ENCODE measurements at regions of chr5 and their contacts with region 1.

Region 1: DNA sequence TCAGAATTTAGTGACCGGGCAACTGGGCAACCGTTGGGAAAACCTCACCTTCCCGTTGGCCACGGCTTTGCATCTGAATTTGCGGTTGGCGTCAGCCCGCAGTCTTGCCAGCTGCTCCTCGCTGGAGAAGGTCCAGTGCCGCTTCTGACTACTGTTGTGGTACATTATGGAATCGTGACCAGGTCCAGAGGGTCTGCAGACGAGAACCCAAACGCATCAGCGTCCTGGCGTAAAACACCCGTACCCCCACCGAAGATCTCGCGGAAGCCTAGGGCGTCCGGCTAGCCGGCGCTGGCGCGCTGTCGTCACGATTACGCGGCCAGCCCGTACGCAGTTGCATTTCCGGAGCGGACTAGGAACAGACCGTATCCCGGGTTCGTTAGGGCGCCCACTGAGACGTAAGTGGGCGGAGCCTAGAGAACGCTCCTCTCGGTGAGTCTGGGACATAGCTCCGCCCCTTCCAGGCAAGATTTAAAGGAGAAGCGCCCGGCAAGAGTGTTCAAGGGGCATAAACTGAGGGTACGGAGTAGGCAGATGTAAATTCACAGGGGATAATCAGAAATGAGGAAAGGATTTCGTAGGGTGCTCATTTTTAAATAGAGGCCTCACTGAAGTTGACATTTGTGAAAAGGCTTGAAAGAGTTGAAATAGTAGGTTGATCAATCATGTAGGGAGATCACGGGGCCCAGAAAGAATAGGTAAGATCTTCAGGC is at the start of gene CCNH:
- DNase-seq: peak; percentile 83 to 98 (median 97)
- ATAC-seq: peak; percentile 99
- H3K4me3 ChIP-seq: peak within 1 kb of the TSS; percentile 88
- H3K4me3 Mint-ChIP-seq: peak within 1 kb of the TSS; percentile 90 to 100 (median 95)
- H3K27ac ChIP-seq: peak within 1 kb of the TSS; percentile 99
- H3K27ac Mint-ChIP-seq: peak within 1 kb of the TSS; percentile 92 to 99 (median 98)
- H3K4me1 ChIP-seq: peaks cover 26 to 28% of the 10 kb centered on the region in 2 donors
- H3K4me1 Mint-ChIP-seq: peaks cover 24 to 62% (median 50%) of the 10 kb centered on the region in 7 donors
- H3K27me3 ChIP-seq: no peaks in the 10 kb centered on the region
- H3K27me3 Mint-ChIP-seq: peaks cover 0 to 3% (median 0%) of the 10 kb centered on the region in 5 donors
- total RNA-seq, gene CCNH: 57.5 to 239 (median 113) TPM

Region 2: DNA sequence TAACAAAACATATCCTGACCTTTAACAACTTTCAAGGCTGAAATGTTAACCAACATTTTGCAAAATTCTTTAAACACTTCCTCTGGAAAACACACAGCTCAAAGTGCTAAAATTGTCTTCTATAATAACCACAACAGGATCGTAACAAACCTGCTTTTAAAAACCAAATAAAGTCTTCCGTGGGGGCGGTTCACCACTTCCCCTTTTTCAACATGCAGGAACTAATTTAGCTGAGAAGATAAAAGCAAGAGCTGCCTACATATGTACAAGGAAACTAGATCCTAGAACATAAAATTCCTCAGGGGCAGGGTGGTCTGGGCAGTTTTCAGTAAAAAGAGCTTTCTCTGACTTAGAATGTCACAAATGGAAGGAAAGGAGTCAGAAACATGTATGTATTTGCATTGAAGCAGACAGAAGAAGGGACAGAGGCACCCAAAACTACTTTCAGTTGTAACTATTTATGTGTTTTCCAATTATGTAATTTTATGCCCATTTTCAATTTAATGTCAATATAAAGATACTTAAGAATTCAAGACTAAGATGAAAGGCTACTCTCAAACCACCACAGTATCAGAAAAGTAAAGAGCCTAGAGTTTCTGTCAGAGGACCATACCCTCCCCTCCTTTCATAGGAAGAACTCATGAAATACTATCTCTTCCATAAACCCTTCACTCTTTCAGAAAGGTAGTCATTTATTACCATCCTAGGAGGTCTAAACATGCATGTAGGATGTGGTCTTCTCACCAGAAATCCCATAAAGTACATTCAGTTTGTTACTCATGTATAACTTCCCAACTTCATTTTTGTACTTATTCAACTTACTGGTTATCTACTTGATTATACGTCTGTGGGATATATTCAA is 331.0 kb before region 1 on chr5:
- CTCF ChIA-PET with region 1: no interaction called
- POLR2A ChIA-PET with region 1: no interaction called
- intact Hi-C with region 1: loop called in 1 of 2 experiments (anchors 5 kb)
- DNase-seq: peak in 8 of 9 donors; percentile 11 to 59 (median 44)
- ATAC-seq: peak; percentile 84
- H3K4me3 ChIP-seq: no peak overlapping the region
- H3K4me3 Mint-ChIP-seq: peak overlapping the region; percentile 42 to 86 (median 72)
- H3K27ac ChIP-seq: no peak overlapping the region
- H3K27ac Mint-ChIP-seq: peak overlapping the region; percentile 53 to 85 (median 68)
- H3K4me1 ChIP-seq: peaks cover 18 to 35% of the 10 kb centered on the region in 2 donors
- H3K4me1 Mint-ChIP-seq: peaks cover 20 to 60% (median 51%) of the 10 kb centered on the region in 7 donors
- H3K27me3 ChIP-seq: no peaks in the 10 kb centered on the region
- H3K27me3 Mint-ChIP-seq: no peaks in the 10 kb centered on the region

Region 3: DNA sequence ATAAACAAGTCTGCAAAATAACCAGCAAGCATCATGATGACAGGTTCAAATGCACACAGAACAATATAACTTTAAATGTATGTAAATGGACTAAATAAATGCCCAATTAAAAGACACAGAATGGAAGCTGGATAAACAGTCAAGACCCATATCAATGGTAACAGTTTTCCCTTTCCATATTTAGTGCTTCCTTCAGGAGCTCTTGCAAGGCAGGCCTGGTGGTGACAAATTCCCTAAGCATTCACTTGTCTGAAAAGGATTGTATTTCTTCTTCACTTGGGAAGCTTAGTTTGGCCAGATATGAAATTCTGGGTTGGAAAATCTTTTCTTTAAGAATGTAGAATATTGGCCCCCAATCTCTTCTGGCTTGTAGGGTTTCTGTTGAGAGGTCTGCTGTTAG is 265.3 kb before region 1 on chr5:
- CTCF ChIA-PET with region 1: no interaction called
- POLR2A ChIA-PET with region 1: no interaction called
- intact Hi-C with region 1: no loop called
- DNase-seq: no peak
- ATAC-seq: no peak
- H3K4me3 ChIP-seq: no peak overlapping the region
- H3K4me3 Mint-ChIP-seq: no peak overlapping the region
- H3K27ac ChIP-seq: no peak overlapping the region
- H3K27ac Mint-ChIP-seq: no peak overlapping the region
- H3K4me1 ChIP-seq: no peaks in the 10 kb centered on the region
- H3K4me1 Mint-ChIP-seq: peaks cover 0 to 9% (median 0%) of the 10 kb centered on the region in 7 donors
- H3K27me3 ChIP-seq: no peaks in the 10 kb centered on the region
- H3K27me3 Mint-ChIP-seq: peaks cover 0 to 11% (median 0%) of the 10 kb centered on the region in 5 donors

Region 4: DNA sequence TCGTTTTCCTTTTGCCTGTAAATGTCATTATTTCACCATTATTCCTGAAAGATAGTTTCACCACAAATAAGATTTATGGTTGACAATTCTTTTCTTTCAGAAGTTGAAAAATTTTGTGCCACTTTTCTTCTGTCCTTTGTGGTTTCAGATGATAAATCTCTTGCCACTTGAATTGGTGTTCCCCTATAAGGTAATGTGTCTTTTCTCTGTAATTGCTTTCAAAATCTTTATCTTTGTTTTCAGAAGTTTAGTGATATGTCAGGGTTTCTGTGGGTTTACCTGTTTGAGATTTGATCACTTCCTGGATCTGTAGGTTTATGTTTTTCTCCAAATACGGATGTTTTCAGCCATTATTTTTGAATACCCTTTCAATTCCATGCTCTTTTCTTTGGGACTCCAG is 130.5 kb before region 1 on chr5:
- CTCF ChIA-PET with region 1: no interaction called
- POLR2A ChIA-PET with region 1: no interaction called
- intact Hi-C with region 1: loop called in 1 of 2 experiments (anchors 5 kb)
- DNase-seq: peak in 7 of 9 donors; percentile 18 to 68 (median 54)
- ATAC-seq: peak; percentile 86
- H3K4me3 ChIP-seq: peak overlapping the region; percentile 27
- H3K4me3 Mint-ChIP-seq: peak overlapping the region; percentile 56 to 89 (median 80)
- H3K27ac ChIP-seq: peak overlapping the region; percentile 72
- H3K27ac Mint-ChIP-seq: peak overlapping the region; percentile 79 to 96 (median 90)
- H3K4me1 ChIP-seq: peaks cover 14 to 26% of the 10 kb centered on the region in 2 donors
- H3K4me1 Mint-ChIP-seq: peaks cover 34 to 82% (median 64%) of the 10 kb centered on the region in 7 donors
- H3K27me3 ChIP-seq: no peaks in the 10 kb centered on the region
- H3K27me3 Mint-ChIP-seq: no peaks in the 10 kb centered on the region

Region 5: DNA sequence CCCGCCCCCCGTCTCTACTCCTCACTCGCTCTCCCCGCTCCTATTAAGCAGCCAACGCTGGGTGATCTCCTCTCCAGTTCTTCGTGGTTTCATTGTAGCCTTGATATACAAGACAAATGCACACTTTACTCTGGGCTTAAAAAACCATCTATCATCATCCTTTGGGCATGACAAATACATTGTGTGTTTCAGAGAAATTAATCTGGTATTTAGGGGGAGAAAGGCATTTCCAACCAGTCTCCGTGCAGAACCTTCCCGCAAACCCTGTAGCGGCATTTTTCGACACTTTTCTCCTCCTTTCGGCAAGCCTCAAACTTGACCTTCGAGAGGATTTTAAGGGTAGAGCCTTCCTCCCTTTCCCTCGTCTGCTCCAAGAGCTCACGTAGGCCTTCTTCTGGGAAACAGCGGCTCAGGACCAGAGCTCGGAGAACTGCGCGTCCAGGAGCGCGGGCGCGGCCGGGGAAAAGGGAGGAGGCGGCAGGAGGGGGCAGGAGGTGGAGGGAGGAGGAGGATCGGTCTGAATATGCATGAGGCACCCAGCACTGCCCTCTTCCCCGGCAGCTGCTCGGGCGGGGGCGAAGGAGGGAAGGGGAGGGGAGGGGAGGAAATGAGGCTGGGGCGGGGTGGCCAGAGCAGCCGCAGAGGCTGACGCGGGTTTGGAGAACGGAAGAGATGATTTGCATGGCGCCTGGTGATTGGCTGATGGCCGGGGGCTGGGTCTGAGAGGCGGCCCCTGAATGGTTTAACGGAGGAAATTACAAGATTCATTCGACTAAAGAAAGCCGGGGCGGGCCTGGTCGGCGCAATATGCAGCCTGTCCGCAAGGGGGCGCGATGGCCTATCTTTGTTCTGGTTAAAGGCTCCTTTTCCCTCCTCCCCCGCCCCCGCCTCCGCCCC is 728.3 kb after region 1 on chr5:
- CTCF ChIA-PET with region 1: no interaction called
- POLR2A ChIA-PET with region 1: no interaction called
- intact Hi-C with region 1: loop called in 1 of 2 experiments (anchors 1 kb)
- DNase-seq: peak; percentile 50 to 83 (median 60)
- ATAC-seq: peak; percentile 92
- H3K4me3 ChIP-seq: peak overlapping the region; percentile 43
- H3K4me3 Mint-ChIP-seq: no peak overlapping the region
- H3K27ac ChIP-seq: no peak overlapping the region
- H3K27ac Mint-ChIP-seq: no peak overlapping the region
- H3K4me1 ChIP-seq: peaks cover 19 to 24% of the 10 kb centered on the region in 2 donors
- H3K4me1 Mint-ChIP-seq: peaks cover 7 to 22% (median 9%) of the 10 kb centered on the region in 7 donors
- H3K27me3 ChIP-seq: peaks cover 17 to 28% of the 10 kb centered on the region in 2 donors
- H3K27me3 Mint-ChIP-seq: peaks cover 18 to 44% (median 38%) of the 10 kb centered on the region in 5 donors

Region 6: DNA sequence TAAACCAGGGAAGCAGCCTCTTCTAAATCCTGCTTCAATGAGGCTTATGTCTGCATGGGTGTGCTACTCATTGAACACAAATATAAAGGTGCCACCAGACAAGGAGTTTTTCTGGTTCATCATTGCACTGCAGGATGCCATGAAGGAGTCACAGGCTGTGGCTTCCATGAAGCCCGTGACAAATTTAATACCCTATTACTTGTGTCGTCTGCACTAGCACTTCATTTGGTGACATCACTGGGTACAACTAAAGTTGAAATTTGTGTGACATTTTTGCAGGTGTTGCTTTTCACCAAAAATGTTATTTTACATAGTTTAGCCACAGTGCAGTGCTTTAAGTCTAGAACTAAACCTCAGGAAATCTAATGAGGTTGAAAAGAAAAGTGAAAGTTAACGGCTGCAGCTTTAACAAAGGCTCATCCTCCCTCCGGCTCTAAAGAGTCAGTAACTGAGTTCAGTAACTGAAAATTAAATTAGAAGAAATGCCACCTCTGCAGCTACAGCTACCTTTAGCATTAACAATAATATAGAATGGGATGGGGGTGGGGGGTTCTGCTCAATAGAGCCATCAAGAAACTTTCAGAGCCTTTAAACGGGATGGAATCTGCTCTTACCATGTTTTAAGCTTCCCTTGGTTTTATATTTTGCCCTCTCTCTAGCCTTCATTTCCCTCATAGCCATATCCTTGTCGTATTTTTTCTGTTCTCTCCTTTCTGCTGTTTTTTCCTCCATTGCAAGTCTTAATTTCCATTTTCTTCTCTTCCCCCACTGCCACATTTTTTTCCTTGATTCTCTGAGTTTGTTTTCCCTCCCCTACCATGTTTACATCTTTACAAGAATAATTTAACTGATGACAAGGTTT is 1089.6 kb after region 1 on chr5:
- CTCF ChIA-PET with region 1: no interaction called
- POLR2A ChIA-PET with region 1: no interaction called
- intact Hi-C with region 1: loop called in 1 of 2 experiments (anchors 5 kb)
- DNase-seq: peak in 5 of 9 donors; percentile 30 to 41 (median 33)
- ATAC-seq: peak; percentile 81
- H3K4me3 ChIP-seq: peak overlapping the region; percentile 74
- H3K4me3 Mint-ChIP-seq: peak overlapping the region; percentile 89 to 100 (median 95)
- H3K27ac ChIP-seq: peak overlapping the region; percentile 70
- H3K27ac Mint-ChIP-seq: peak overlapping the region; percentile 84 to 98 (median 95)
- H3K4me1 ChIP-seq: no peaks in the 10 kb centered on the region
- H3K4me1 Mint-ChIP-seq: peaks cover 7 to 23% (median 17%) of the 10 kb centered on the region in 7 donors
- H3K27me3 ChIP-seq: no peaks in the 10 kb centered on the region
- H3K27me3 Mint-ChIP-seq: peaks cover 0 to 14% (median 6%) of the 10 kb centered on the region in 5 donors